ENCODE measurements at regions of chr14 and their contacts with region 1.

Region 1: DNA sequence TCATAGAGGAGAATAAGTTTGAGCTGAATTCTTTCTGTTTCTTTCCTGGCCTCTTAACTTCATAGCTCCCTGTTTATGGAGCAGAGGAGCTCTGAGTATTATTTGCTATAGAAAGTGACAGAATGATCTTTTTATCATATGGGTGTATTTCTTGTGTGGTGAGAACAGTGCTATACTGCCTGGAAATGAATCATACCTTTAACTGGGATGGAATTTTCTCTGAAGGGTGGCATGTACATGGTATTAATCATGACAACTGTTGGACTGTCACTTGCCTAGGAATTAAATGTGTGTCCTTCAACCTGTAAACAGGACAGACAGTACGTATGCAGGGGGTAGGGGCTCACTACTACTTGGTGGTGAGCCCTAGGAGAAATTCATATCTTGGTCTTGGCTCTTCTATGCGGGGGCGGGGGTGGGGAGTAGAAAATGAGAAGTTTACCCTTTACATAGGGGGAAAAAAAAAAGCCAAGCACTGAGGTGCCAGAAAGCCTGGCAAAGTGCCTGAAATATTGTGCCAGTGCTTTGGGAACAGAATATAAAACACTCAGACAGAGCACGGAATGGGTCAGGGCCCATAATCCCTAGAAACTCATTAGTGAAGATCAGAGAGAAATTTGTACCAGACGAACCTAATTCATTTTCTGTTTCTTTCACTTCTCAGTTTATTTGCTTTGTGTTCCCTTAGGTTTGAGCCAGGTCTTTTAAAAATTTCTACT is 33.8 kb downstream of the ARMH4 start:
- DNase-seq: no peak
- ATAC-seq: no peak
- H3K4me3 ChIP-seq: no peak overlapping the region
- H3K27ac ChIP-seq: no peak overlapping the region
- H3K4me1 ChIP-seq: no peaks in the 10 kb centered on the region
- H3K27me3 ChIP-seq: no peaks in the 10 kb centered on the region
- CTCF ChIP-seq: no peak
- POLR2A ChIP-seq: no peak

Region 2: GRCh38 chr14:57502586-57503254 is 615.5 kb before region 1 on chr14:
- intact Hi-C with region 1: no loop called
- DNase-seq: peak in 2 of 5 donors; percentile 23 to 27
- ATAC-seq: peak in 1 of 4 donors; percentile 36
- H3K4me3 ChIP-seq: no peak overlapping the region
- H3K27ac ChIP-seq: no peak overlapping the region
- H3K4me1 ChIP-seq: no peaks in the 10 kb centered on the region
- H3K27me3 ChIP-seq: no peaks in the 10 kb centered on the region
- CTCF ChIP-seq: no peak
- POLR2A ChIP-seq: no peak

Region 3: DNA sequence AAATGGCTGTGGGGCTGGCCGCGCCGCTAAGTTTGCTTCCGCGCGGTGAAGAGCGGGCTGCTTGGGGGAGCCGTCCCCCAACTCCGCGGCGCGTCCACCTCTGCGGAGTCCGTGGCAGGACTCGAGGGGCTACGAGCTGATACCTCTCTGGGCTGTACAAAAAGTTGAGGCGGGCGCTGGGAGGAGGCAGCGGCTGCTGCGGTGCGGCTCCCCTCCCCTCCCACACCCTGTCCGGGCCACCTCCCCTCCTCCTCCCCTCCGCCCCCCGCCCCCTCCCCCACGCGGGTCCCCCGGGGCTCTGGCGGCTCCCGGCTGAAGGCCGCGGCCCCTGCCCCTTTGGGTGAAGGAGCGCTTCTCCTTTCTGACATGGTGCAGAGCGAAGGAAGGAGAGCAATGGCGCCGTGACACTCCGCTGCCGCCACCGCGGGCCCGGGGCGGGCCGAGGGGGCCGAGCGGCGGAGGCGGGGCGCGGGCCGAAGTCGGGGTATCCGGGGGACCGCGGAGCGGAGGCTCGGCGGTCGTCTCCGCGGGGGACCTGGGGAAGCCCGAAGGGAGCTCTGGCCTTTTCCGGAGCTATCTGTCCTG is 180.8 kb after region 1 on chr14:
- intact Hi-C with region 1: no loop called
- DNase-seq: peak in 4 of 5 donors; percentile 35 to 71 (median 48)
- ATAC-seq: peak in 3 of 4 donors; percentile 12 to 48 (median 35)
- H3K4me3 ChIP-seq: peak overlapping the region; percentile 70 to 100 (median 94)
- H3K27ac ChIP-seq: peak overlapping the region; percentile 79 to 96 (median 94)
- H3K4me1 ChIP-seq: peaks cover 10 to 52% (median 36%) of the 10 kb centered on the region in 12 donors
- H3K27me3 ChIP-seq: no peaks in the 10 kb centered on the region
- CTCF ChIP-seq: no peak
- POLR2A ChIP-seq: no peak

Region 4: GRCh38 chr14:58362798-58363412 is 244.6 kb after region 1 on chr14:
- intact Hi-C with region 1: loop called in 2 of 10 experiments (anchors 10 kb)
- DNase-seq: no peak
- ATAC-seq: no peak
- H3K4me3 ChIP-seq: no peak overlapping the region
- H3K27ac ChIP-seq: no peak overlapping the region
- H3K4me1 ChIP-seq: peaks cover 0 to 6% (median 0%) of the 10 kb centered on the region in 12 donors
- H3K27me3 ChIP-seq: no peaks in the 10 kb centered on the region
- CTCF ChIP-seq: peak in 9 of 12 donors; percentile 7 to 44 (median 19)
- POLR2A ChIP-seq: no peak

Measured in heart left ventricle (tissue), 16 donors.